Vagina (tissue), 2 donors: ENCODE measurements at regions of chr13 and their contacts with region 1.

Region 1: DNA sequence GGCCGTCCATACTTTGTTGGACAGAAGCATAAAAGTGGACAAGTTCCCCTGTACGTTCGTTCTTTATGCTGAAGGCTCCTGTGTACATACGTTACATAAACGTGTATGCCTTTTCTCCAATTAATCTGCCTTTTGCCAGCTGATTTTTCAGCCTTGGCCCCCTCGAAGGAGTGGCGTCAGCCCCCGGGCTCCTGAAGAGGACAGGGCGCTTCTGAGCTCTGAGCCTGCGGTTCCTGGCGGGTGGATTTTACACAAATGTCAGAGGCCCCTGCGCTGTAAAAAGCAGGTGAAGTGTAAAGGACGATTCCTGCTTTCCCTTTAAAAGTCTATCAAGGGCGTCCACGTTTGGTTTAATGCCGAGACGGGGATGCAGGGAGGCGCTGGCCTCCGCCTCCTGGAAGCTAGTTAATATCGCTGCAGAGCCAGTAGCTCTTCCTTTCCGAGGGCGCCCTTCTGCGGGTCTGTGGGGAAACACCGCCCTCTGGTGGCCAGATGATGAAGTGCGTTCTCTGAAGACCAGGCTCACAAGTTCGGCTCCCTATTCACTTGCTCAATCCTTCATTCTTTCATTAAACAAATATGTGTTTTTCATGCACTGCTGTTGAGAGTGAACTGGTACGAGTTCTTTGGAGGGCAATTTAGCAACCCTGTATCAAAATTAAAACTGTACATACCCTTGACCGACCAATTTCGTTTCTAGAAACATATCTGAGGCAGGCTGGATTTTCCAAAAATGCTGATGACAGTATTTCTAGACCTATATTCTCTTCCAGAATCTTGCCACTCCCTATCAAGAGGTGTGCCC is 62.0 kb downstream of the GPR12 start:
- DNase-seq: peak in 1 of 2 donors; percentile 93
- H3K4me3 ChIP-seq: peak overlapping the region; percentile 0 to 9
- H3K27ac ChIP-seq: no peak overlapping the region
- H3K4me1 ChIP-seq: no peaks in the 10 kb centered on the region
- H3K27me3 ChIP-seq: no peaks in the 10 kb centered on the region
- CTCF ChIP-seq: peak; percentile 88 to 99 (median 93)
- POLR2A ChIP-seq: no peak

Region 2: GRCh38 chr13:26186118-26186870 is 512.3 kb before region 1 on chr13:
- intact Hi-C with region 1: loop called (anchors 5 kb)
- DNase-seq: peak in 1 of 2 donors; percentile 91
- H3K4me3 ChIP-seq: peak overlapping the region; percentile 50 to 54
- H3K27ac ChIP-seq: peak overlapping the region; percentile 74
- H3K4me1 ChIP-seq: peaks cover 20% of the 10 kb centered on the region
- H3K27me3 ChIP-seq: no peaks in the 10 kb centered on the region
- CTCF ChIP-seq: peak in 1 of 3 experiments; percentile 20
- POLR2A ChIP-seq: no peak

Region 3: GRCh38 chr13:26253787-26254582 is 444.6 kb before region 1 on chr13 and contains the start of gene CDK8:
- intact Hi-C with region 1: loop called (anchors 10 kb)
- DNase-seq: peak in 1 of 2 donors; percentile 89
- H3K4me3 ChIP-seq: peak within 1 kb of the TSS; percentile 88 to 99
- H3K27ac ChIP-seq: peak within 1 kb of the TSS; percentile 91
- H3K4me1 ChIP-seq: peaks cover 21% of the 10 kb centered on the region
- H3K27me3 ChIP-seq: no peaks in the 10 kb centered on the region
- CTCF ChIP-seq: no peak
- POLR2A ChIP-seq: peak in 1 of 2 donors; percentile 30
- total RNA-seq, gene CDK8: 11.3 TPM

Region 4: DNA sequence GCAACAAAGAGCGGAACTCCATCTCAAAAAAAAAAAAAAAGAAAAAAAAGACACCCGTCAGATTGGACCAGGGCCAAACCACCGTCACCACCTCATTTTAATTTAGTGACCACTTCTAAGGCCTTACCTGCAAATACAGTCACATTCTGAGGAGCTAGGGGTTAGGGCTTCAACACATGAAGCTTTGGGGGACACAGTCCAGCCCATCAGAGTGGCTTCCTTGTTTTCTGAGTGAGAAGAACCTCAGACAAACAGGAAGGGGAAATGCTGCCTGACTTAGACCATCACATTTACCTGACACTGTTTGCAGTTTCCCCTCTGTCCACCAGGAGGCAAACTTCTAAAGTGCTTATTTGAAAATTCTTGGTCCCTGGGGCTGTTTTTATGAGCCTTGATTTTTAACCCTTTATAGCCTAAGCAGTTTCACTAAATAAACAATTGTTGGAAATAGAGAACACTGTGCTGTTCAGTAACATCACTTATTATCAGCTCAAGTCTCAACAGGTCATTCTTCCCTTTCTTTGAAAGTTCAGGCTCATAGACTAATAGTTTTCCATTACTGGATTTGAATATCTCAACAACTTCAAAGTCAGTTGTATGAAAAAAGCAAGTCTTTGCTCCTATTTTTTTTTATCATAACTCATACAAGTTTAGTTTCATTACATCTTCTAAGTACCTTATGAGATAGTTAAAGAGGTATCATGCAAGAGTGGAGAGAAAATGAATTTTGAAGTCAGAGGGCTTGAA is 216.0 kb before region 1 on chr13:
- intact Hi-C with region 1: loop called (anchors 5 kb)
- DNase-seq: no peak
- H3K4me3 ChIP-seq: no peak overlapping the region
- H3K27ac ChIP-seq: no peak overlapping the region
- H3K4me1 ChIP-seq: no peaks in the 10 kb centered on the region
- H3K27me3 ChIP-seq: no peaks in the 10 kb centered on the region
- CTCF ChIP-seq: peak; percentile 51 to 82 (median 67)
- POLR2A ChIP-seq: no peak